Common myeloid progenitor, CD34-positive (primary cell): ENCODE measurements at regions of chr4 and their contacts with region 1.

Region 1: GRCh38 chr4:111937368-111937767 is 207.9 kb upstream of the FAM241A start:
- DNase-seq: peak; percentile 40 to 49 (median 43)
- H3K4me3 ChIP-seq: no peak overlapping the region
- H3K27ac ChIP-seq: no peak overlapping the region
- H3K4me1 ChIP-seq: peaks cover 0 to 7% (median 2%) of the 10 kb centered on the region in 4 experiments
- H3K27me3 ChIP-seq: peaks cover 0 to 30% (median 14%) of the 10 kb centered on the region in 5 experiments

Region 2: DNA sequence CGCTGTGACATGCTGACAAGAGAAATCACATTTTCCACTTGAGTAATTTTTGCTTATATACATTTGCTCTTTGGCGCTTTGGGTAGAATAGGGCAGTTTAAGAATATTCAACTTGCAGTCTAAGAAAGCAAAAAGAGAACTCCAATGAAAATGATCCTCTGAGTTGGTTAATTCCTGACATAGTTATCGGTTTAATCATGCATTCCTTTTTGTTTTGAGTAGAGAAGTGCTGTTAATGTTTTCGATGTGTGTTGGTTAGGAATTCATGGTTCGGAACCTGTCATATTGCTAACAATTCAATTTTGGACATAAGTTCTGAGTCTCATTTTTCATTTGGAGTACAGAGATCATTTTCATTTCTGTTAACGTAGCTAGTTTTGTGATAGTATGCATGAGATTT is 613.9 kb before region 1 on chr4:
- CTCF ChIA-PET with region 1: no interaction called
- POLR2A ChIA-PET with region 1: no interaction called
- DNase-seq: no peak
- H3K4me3 ChIP-seq: no peak overlapping the region
- H3K27ac ChIP-seq: no peak overlapping the region
- H3K4me1 ChIP-seq: no peaks in the 10 kb centered on the region
- H3K27me3 ChIP-seq: no peaks in the 10 kb centered on the region

Region 3: DNA sequence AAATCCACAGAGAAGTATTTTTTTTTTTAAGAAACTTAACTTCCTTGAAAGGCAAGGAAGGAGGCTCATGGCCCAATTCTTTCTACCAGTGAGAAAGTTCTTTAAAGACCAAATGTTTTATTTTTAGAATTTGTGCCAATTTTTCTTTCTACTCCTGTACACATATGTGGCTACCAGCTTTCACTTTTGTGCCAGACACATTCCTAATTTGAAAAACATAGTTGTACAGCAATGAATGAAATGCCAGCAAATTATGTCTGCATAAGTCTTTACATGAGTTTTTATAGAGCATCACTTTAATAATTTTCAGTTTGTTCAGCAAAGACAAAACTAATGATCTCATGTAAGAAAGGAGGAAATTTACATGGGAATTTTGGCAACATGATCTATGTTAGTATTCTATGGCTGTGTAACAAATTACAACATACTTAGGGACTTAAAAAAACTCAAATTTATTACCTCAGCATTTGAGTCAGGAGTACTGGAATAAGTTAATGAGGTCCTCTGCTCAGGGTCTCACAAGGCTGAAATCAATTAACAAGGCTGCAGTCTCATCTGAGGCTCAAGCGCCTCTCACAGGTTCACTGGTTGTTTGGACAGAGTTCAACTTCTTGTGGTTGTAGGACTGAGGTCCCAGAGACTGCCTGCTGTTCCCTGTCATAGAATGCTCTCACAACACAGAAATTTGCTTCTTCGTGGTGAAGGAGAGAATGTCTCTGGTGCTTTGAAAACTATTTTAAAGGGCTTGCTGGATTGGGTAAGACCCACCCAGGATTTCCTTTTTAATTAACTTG is 470.4 kb before region 1 on chr4:
- CTCF ChIA-PET with region 1: no interaction called
- POLR2A ChIA-PET with region 1: no interaction called
- DNase-seq: no peak
- H3K4me3 ChIP-seq: no peak overlapping the region
- H3K27ac ChIP-seq: no peak overlapping the region
- H3K4me1 ChIP-seq: no peaks in the 10 kb centered on the region
- H3K27me3 ChIP-seq: no peaks in the 10 kb centered on the region

Region 4: GRCh38 chr4:111641955-111642579 is 295.3 kb before region 1 on chr4:
- CTCF ChIA-PET with region 1: interaction called, 15 read pairs
- POLR2A ChIA-PET with region 1: no interaction called
- DNase-seq: peak; percentile 91 to 94 (median 93)
- H3K4me3 ChIP-seq: no peak overlapping the region
- H3K27ac ChIP-seq: no peak overlapping the region
- H3K4me1 ChIP-seq: peaks cover 0 to 2% (median 0%) of the 10 kb centered on the region in 4 experiments
- H3K27me3 ChIP-seq: peaks cover 0 to 5% (median 3%) of the 10 kb centered on the region in 5 experiments

Region 5: DNA sequence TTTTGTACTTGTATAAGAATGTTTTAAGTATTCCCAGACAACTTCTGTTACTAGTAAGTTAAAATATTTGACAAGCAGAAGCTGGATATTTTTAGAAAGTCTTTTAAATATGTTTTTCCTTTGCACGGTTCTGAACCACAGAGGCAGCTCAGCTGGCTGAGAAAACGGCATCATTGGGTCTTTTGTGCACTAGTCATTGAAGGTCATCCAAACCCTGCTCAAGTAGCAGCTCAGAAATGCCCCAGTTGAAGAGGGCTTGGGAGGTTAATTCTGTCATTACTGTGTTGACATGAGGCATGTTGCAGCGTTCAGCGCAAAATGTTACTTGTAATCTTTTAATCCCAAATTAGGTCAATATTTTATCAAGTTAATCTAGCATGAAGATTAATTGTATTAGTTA is 175.8 kb before region 1 on chr4:
- CTCF ChIA-PET with region 1: no interaction called
- POLR2A ChIA-PET with region 1: no interaction called
- DNase-seq: no peak
- H3K4me3 ChIP-seq: no peak overlapping the region
- H3K27ac ChIP-seq: no peak overlapping the region
- H3K4me1 ChIP-seq: no peaks in the 10 kb centered on the region
- H3K27me3 ChIP-seq: no peaks in the 10 kb centered on the region